Activated CD4-positive, alpha-beta T cell treated with anti-CD3 and anti-CD28 coated beads for 36 hours (primary cell): ENCODE measurements at regions of chr9 and their contacts with region 1.

Region 1: GRCh38 chr9:114691046-114691955 is 9.3 kb upstream of the TEX48 start:
- DNase-seq: peak; percentile 87
- ATAC-seq: peak; percentile 75
- H3K4me3 Mint-ChIP-seq: peak overlapping the region; percentile 48
- H3K27ac Mint-ChIP-seq: peak overlapping the region; percentile 98
- H3K4me1 Mint-ChIP-seq: peaks cover 94% of the 10 kb centered on the region
- H3K27me3 Mint-ChIP-seq: no peaks in the 10 kb centered on the region

Region 2: GRCh38 chr9:114304416-114305188 is 386.7 kb before region 1 on chr9:
- CTCF ChIA-PET with region 1: no interaction called
- POLR2A ChIA-PET with region 1: no interaction called
- intact Hi-C with region 1: no loop called
- DNase-seq: no peak
- ATAC-seq: no peak
- H3K4me3 Mint-ChIP-seq: no peak overlapping the region
- H3K27ac Mint-ChIP-seq: no peak overlapping the region
- H3K4me1 Mint-ChIP-seq: peaks cover 4% of the 10 kb centered on the region
- H3K27me3 Mint-ChIP-seq: no peaks in the 10 kb centered on the region

Region 3: DNA sequence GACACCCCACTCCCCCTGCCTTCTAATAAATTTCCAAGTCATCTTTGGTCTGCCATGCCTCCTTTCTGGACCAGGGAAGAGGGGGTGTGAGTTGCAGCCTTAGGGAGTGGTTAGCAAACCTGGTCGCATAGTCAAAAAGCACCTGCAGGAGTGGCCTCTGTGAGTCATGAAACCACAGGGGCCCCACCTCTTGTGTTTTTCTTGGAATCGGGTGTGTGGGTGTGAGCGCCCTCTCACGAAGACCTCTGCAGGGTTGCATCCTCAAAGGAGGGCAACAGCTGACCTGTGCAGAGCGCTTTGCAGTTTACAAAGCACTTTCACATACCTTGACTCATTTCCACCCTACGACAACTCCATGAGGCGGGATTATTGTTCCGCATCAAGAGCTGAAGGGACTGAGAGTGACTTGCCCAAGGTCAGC is 27.5 kb after region 1 on chr9:
- CTCF ChIA-PET with region 1: interaction called, 5 read pairs
- POLR2A ChIA-PET with region 1: interaction called, 13 read pairs
- intact Hi-C with region 1: loop called (anchors 1 kb)
- DNase-seq: peak; percentile 95
- ATAC-seq: peak; percentile 94
- H3K4me3 Mint-ChIP-seq: peak overlapping the region; percentile 15
- H3K27ac Mint-ChIP-seq: peak overlapping the region; percentile 96
- H3K4me1 Mint-ChIP-seq: peaks cover 56% of the 10 kb centered on the region
- H3K27me3 Mint-ChIP-seq: peaks cover 2% of the 10 kb centered on the region

Region 4: GRCh38 chr9:114894801-114895433 is 203.6 kb after region 1 on chr9:
- CTCF ChIA-PET with region 1: interaction called, 3 read pairs
- POLR2A ChIA-PET with region 1: interaction called, 15 read pairs
- intact Hi-C with region 1: loop called in 1 of 2 experiments (anchors 1 kb)
- DNase-seq: peak; percentile 77
- ATAC-seq: peak; percentile 76
- H3K4me3 Mint-ChIP-seq: peak overlapping the region; percentile 14
- H3K27ac Mint-ChIP-seq: peak overlapping the region; percentile 90
- H3K4me1 Mint-ChIP-seq: peaks cover 21% of the 10 kb centered on the region
- H3K27me3 Mint-ChIP-seq: no peaks in the 10 kb centered on the region

Region 5: GRCh38 chr9:114958021-114958843 is 266.9 kb after region 1 on chr9:
- CTCF ChIA-PET with region 1: interaction called, 3 read pairs
- POLR2A ChIA-PET with region 1: interaction called, 3 read pairs
- intact Hi-C with region 1: loop called (anchors 1 to 2 kb)
- DNase-seq: peak; percentile 68
- ATAC-seq: peak; percentile 83
- H3K4me3 Mint-ChIP-seq: peak overlapping the region; percentile 68
- H3K27ac Mint-ChIP-seq: peak overlapping the region; percentile 96
- H3K4me1 Mint-ChIP-seq: peaks cover 56% of the 10 kb centered on the region
- H3K27me3 Mint-ChIP-seq: no peaks in the 10 kb centered on the region

Region 6: GRCh38 chr9:115008536-115009270 is 317.4 kb after region 1 on chr9:
- CTCF ChIA-PET with region 1: no interaction called
- POLR2A ChIA-PET with region 1: interaction called, 8 read pairs
- intact Hi-C with region 1: loop called in 1 of 2 experiments (anchors 2 kb)
- DNase-seq: peak; percentile 62
- ATAC-seq: peak; percentile 45
- H3K4me3 Mint-ChIP-seq: no peak overlapping the region
- H3K27ac Mint-ChIP-seq: peak overlapping the region; percentile 11
- H3K4me1 Mint-ChIP-seq: peaks cover 85% of the 10 kb centered on the region
- H3K27me3 Mint-ChIP-seq: no peaks in the 10 kb centered on the region

Region 7: DNA sequence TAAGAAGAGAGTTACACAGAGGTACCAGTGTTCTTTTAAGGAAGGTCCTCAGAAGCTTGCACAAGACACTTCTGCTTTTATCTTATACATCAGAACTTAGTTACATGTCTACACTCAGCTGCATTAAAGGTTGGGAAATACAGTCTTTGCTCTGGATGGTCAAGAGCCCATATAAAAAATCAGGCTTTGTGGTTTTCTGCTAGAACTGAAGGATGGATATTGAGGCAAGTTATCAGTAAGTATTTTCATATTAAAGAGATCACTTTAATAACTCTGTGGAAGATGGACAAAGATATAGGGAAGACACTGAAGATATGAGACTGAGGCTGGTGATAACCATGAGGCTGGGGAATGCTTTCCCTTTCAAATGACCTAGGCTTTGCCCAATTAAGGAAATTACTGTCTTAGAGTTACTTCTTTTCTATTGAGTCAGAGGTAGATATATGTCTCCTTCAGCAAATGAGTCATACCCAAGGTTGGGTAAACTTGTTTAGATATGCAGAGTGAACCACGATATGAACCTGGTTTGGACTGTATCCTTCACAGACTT is 513.7 kb after region 1 on chr9:
- CTCF ChIA-PET with region 1: no interaction called
- POLR2A ChIA-PET with region 1: no interaction called
- intact Hi-C with region 1: loop called in 1 of 2 experiments (anchors 5 kb)
- DNase-seq: no peak
- ATAC-seq: peak; percentile 78
- H3K4me3 Mint-ChIP-seq: no peak overlapping the region
- H3K27ac Mint-ChIP-seq: peak overlapping the region; percentile 20
- H3K4me1 Mint-ChIP-seq: peaks cover 38% of the 10 kb centered on the region
- H3K27me3 Mint-ChIP-seq: peaks cover 32% of the 10 kb centered on the region

Region 8: GRCh38 chr9:115234094-115234493 is 542.8 kb after region 1 on chr9:
- CTCF ChIA-PET with region 1: no interaction called
- POLR2A ChIA-PET with region 1: no interaction called
- intact Hi-C with region 1: no loop called
- DNase-seq: no peak
- ATAC-seq: no peak
- H3K4me3 Mint-ChIP-seq: no peak overlapping the region
- H3K27ac Mint-ChIP-seq: no peak overlapping the region
- H3K4me1 Mint-ChIP-seq: no peaks in the 10 kb centered on the region
- H3K27me3 Mint-ChIP-seq: peaks cover 26% of the 10 kb centered on the region